Panc1 (cell line): ENCODE measurements at regions of chr17 and their contacts with region 1.

Region 1: GRCh38 chr17:34610033-34610432 is 30.7 kb downstream of the TMEM132E start:
- DNase-seq: no peak
- ATAC-seq: no peak
- H3K4me3 ChIP-seq: no peak overlapping the region
- H3K27ac ChIP-seq: no peak overlapping the region
- H3K4me1 ChIP-seq: no peaks in the 10 kb centered on the region
- H3K27me3 ChIP-seq: peaks cover 24% of the 10 kb centered on the region
- CTCF ChIP-seq: no peak

Region 2: DNA sequence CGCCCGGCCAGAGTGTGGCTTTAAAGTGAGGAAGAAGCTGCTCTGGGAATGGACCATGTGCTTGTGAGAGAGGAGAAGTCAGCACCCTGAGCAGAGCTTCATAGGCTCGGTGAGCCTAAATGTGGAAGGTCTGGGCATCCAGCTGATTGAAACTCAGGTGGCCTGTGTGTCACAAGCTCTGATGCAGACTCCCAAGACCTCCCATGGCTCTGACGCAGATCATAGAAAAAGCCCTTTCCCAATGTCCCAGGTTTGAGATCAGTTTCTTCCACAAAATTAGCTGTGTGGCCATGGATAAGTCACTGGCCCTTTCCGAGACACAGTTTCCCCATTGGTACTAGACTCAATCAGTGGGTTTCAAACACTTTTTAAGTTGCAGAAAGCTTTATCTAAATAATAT is 535.0 kb before region 1 on chr17:
- CTCF ChIA-PET with region 1: no interaction called
- POLR2A ChIA-PET with region 1: interaction called, 11 read pairs
- in situ Hi-C with region 1: no loop called
- intact Hi-C with region 1: no loop called
- DNase-seq: no peak
- ATAC-seq: no peak
- H3K4me3 ChIP-seq: no peak overlapping the region
- H3K27ac ChIP-seq: no peak overlapping the region
- H3K4me1 ChIP-seq: no peaks in the 10 kb centered on the region
- H3K27me3 ChIP-seq: no peaks in the 10 kb centered on the region; the same call in 1 of the 2 replicates
- CTCF ChIP-seq: no peak

Region 3: GRCh38 chr17:34511265-34511664 is 98.8 kb before region 1 on chr17:
- CTCF ChIA-PET with region 1: no interaction called
- POLR2A ChIA-PET with region 1: no interaction called
- in situ Hi-C with region 1: no loop called
- intact Hi-C with region 1: no loop called
- DNase-seq: no peak
- ATAC-seq: no peak
- H3K4me3 ChIP-seq: no peak overlapping the region
- H3K27ac ChIP-seq: no peak overlapping the region
- H3K4me1 ChIP-seq: no peaks in the 10 kb centered on the region
- H3K27me3 ChIP-seq: peaks cover 22% of the 10 kb centered on the region
- CTCF ChIP-seq: no peak